ENCODE measurements at regions of chr3 and their contacts with region 1.

Region 1: DNA sequence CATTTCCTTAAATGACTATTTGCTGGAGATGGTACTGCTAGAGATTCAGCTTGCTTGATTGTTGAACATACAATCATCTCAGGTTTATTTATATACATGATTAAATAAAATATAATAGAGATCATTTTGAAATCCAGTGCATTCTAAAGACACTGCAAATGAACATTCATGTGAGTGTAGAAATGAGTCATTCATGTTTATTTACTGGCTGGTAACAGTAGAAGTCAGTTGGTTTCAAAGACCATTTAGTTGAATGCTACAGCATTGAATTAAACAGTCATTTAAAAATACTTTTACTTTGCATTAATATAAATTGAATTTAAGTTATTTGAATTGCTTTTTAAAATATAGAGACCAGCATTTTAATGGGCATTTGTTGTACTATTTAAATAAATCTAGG is 551.9 kb upstream of the GOLIM4 start:
- DNase-seq: no peak
- H3K4me3 ChIP-seq: no peak overlapping the region
- H3K27ac ChIP-seq: no peak overlapping the region
- H3K4me1 ChIP-seq: no peaks in the 10 kb centered on the region
- H3K27me3 ChIP-seq: no peaks in the 10 kb centered on the region
- CTCF ChIP-seq: no peak
- EP300 ChIP-seq: no peak
- POLR2A ChIP-seq: no peak

Region 2: GRCh38 chr3:167559924-167560323 is 1087.7 kb before region 1 on chr3:
- intact Hi-C with region 1: loop called in 1 of 4 experiments (anchors 5 kb)
- DNase-seq: no peak
- H3K4me3 ChIP-seq: no peak overlapping the region
- H3K27ac ChIP-seq: no peak overlapping the region
- H3K4me1 ChIP-seq: no peaks in the 10 kb centered on the region
- H3K27me3 ChIP-seq: no peaks in the 10 kb centered on the region
- CTCF ChIP-seq: no peak
- EP300 ChIP-seq: no peak
- POLR2A ChIP-seq: no peak

Region 3: DNA sequence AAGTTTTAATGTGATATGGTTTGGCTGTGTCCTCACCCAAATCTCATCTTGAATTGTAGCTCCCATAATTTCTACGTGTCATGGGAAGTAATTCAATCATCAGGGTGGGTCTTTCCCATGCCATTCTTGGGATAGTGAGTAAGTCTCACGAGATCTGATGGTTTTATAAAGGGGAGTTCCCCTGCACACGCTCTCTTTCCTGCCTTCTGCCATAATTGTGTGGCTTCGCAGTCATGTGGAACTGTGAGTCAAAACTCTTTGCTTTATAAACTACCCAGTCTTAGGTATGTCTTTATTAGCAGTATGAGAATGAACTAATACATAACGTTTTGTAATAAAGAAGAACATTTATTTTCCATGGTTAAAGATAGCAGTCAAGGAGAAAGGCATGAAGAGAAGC is 512.7 kb before region 1 on chr3:
- intact Hi-C with region 1: no loop called
- DNase-seq: no peak
- H3K4me3 ChIP-seq: no peak overlapping the region
- H3K27ac ChIP-seq: no peak overlapping the region
- H3K4me1 ChIP-seq: no peaks in the 10 kb centered on the region
- H3K27me3 ChIP-seq: no peaks in the 10 kb centered on the region
- CTCF ChIP-seq: no peak
- EP300 ChIP-seq: no peak
- POLR2A ChIP-seq: no peak

Region 4: GRCh38 chr3:168989396-168989795 is 341.8 kb after region 1 on chr3:
- intact Hi-C with region 1: no loop called
- DNase-seq: no peak
- H3K4me3 ChIP-seq: no peak overlapping the region
- H3K27ac ChIP-seq: no peak overlapping the region
- H3K4me1 ChIP-seq: no peaks in the 10 kb centered on the region
- H3K27me3 ChIP-seq: peaks cover 2% of the 10 kb centered on the region
- CTCF ChIP-seq: no peak
- EP300 ChIP-seq: no peak
- POLR2A ChIP-seq: no peak

Region 5: DNA sequence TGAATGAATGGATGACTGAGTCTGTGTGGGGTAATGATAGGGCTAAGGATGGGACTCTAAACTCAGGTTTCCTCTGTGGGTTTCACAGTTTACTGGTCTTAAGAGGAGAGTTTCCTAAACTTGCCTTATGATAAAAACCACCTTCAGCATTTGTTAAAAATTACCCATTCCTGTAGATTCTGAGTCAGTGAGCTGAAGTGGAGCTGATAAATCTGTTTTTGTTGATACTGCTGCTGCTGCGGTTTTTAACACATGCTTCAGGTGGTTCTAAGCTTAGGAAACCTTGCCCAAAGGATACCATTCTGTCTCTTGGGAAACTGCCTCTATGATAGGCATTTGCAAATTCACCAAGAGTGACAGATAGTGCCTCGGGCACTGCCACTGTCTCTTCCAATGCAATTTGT is 963.3 kb after region 1 on chr3:
- intact Hi-C with region 1: no loop called
- DNase-seq: no peak
- H3K4me3 ChIP-seq: no peak overlapping the region
- H3K27ac ChIP-seq: no peak overlapping the region
- H3K4me1 ChIP-seq: no peaks in the 10 kb centered on the region
- H3K27me3 ChIP-seq: no peaks in the 10 kb centered on the region
- CTCF ChIP-seq: no peak
- EP300 ChIP-seq: no peak
- POLR2A ChIP-seq: no peak

Measured in ovary (tissue), 10 donors.